ENCODE measurements at regions of chr9 and their contacts with region 1.

Region 1: DNA sequence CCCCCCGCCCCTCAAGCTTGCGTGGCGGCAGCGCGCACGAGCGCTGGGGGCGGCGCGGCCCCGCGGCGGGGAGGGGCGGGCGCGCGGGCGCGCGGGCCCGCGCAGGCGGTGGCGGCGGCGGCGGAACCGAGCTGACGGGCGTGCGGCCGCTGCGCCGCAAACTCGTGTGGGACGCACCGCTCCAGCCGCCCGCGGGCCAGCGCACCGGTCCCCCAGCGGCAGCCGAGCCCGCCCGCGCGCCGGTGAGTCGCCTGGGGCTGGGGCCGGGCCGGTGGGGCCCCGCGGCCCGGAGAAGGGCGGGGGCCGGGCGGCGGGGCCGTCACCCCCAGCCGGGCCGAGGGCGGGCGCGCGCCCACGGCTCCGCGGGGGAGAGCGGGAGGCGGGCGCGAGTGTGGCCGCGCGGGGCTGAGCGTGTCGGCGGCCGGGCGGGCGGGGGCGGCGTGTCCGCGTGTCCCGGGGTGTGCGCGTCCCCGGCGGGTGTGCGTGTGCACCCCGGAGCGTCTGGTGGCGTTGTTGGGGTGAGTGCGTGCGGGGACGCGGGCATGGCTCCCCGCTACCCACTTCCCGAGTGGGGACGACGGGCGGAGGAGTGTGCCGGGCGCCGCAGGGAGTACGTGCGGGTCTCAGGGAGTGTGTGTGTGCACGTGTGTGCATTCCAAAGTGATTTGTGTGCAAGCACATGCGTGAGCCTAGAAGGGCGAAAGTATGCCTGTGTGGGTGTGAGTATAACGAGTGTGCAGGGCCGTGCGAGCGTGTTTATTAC is at the start of gene NEK6:
- DNase-seq: peak; percentile 45 to 78
- H3K4me3 ChIP-seq: peak within 1 kb of the TSS; percentile 73 to 91
- H3K27ac ChIP-seq: peak within 1 kb of the TSS; percentile 91 to 92
- H3K4me1 ChIP-seq: peaks cover 8 to 45% (median 40%) of the 10 kb centered on the region in 4 donors
- H3K27me3 ChIP-seq: no peaks in the 10 kb centered on the region
- CTCF ChIP-seq: no peak

Region 2: DNA sequence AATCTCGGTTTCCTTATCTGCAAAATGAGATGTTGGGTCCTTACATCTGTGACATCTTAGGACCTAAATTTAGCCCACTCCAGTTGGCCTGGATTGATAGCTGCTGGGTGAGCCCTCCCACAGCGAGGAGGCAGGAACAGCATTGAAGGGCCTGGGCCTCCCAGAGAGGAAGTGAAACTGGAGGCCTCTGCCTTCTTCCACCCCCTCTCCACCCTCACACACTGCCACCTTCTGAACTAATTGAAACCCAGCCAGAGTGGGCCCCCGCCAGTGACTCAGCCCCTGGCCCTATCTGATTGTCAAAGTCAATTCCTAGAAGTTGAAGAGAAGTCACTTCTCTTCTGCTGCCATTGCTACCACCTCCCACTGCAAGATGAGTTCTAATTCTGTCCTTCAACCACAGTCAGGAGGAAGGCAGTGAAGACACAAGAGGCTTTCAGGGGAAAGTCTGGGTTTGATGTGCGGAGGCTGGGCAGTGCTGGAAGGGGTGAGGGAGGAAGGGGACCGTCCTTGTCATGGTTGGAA is 55.5 kb before region 1 on chr9:
- intact Hi-C with region 1: no loop called
- DNase-seq: peak in 1 of 2 donors; percentile 60
- H3K4me3 ChIP-seq: no peak overlapping the region
- H3K27ac ChIP-seq: no peak overlapping the region
- H3K4me1 ChIP-seq: no peaks in the 10 kb centered on the region
- H3K27me3 ChIP-seq: peaks cover 0 to 2% of the 10 kb centered on the region in 2 donors
- CTCF ChIP-seq: no peak

Region 3: DNA sequence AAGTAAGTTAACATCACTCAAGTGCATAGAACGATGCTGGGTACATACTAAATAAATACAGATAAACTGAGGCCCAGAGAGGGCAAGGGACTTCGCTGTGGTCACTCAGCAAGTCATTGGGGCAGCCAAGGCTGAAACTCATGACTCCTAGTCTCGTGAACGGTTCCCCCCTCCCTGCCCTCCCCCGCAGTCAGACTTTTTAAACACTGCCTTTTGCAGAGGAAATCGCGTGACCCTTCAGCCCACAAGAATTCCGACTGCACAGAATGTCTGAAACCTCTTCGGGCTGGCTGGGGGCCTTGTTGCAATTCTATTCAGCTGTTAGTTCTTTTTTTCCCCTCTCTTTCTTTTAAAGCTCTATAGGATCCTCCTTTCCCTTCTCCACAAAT is 27.9 kb after region 1 on chr9:
- intact Hi-C with region 1: loop called (anchors 2 kb)
- DNase-seq: peak; percentile 89 to 96
- H3K4me3 ChIP-seq: no peak overlapping the region
- H3K27ac ChIP-seq: peak overlapping the region; percentile 93
- H3K4me1 ChIP-seq: peaks cover 0 to 84% (median 71%) of the 10 kb centered on the region in 4 donors
- H3K27me3 ChIP-seq: no peaks in the 10 kb centered on the region
- CTCF ChIP-seq: no peak

Region 4: GRCh38 chr9:124320062-124320973 is 62.3 kb after region 1 on chr9:
- intact Hi-C with region 1: loop called (anchors 10 kb)
- DNase-seq: peak; percentile 67 to 84
- H3K4me3 ChIP-seq: no peak overlapping the region
- H3K27ac ChIP-seq: peak overlapping the region; percentile 15 to 17
- H3K4me1 ChIP-seq: peaks cover 0 to 9% (median 4%) of the 10 kb centered on the region in 4 donors
- H3K27me3 ChIP-seq: no peaks in the 10 kb centered on the region
- CTCF ChIP-seq: peak; percentile 83 to 84

Measured in tibial artery (tissue), 4 donors.